Spleen (tissue), 13 donors: ENCODE measurements at regions of chr7 and their contacts with region 1.

Region 1: GRCh38 chr7:29408841-29409243 is 154.8 kb upstream of the PRR15 start:
- DNase-seq: no peak
- H3K4me3 ChIP-seq: no peak overlapping the region
- H3K27ac ChIP-seq: no peak overlapping the region
- H3K4me1 ChIP-seq: peaks cover 0 to 4% (median 2%) of the 10 kb centered on the region in 6 donors
- H3K27me3 ChIP-seq: no peaks in the 10 kb centered on the region
- CTCF ChIP-seq: peak; percentile 82 to 96 (median 93)
- POLR2A ChIP-seq: no peak

Region 2: DNA sequence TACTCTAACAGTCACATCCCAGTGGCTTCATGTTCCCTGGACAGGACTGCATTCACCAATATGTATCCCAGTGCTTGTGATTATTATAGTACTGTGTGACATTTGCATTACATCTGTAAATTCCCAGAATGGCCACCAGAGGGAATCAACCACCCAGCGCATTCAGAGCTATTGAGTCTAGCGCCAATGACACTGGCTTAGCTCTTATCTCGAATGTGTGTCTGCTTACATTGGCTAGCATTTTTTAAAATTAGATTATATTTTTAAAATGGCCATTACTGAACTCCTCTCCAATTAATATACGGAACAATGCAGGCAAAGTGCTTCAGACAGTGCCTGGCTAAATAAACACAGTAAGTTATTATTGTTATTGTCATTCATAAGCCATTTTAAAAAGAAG is 487.0 kb before region 1 on chr7:
- intact Hi-C with region 1: loop called (anchors 2 kb)
- DNase-seq: no peak
- H3K4me3 ChIP-seq: no peak overlapping the region
- H3K27ac ChIP-seq: no peak overlapping the region
- H3K4me1 ChIP-seq: peaks cover 8 to 27% (median 23%) of the 10 kb centered on the region in 6 donors
- H3K27me3 ChIP-seq: no peaks in the 10 kb centered on the region
- CTCF ChIP-seq: peak; percentile 47 to 87 (median 76)
- POLR2A ChIP-seq: no peak

Region 3: GRCh38 chr7:29113384-29114103 is 295.3 kb before region 1 on chr7:
- intact Hi-C with region 1: loop called (anchors 5 kb)
- DNase-seq: no peak
- H3K4me3 ChIP-seq: no peak overlapping the region
- H3K27ac ChIP-seq: peak overlapping the region in 5 of 8 donors; percentile 26 to 64 (median 46)
- H3K4me1 ChIP-seq: peaks cover 0 to 54% (median 24%) of the 10 kb centered on the region in 6 donors
- H3K27me3 ChIP-seq: no peaks in the 10 kb centered on the region
- CTCF ChIP-seq: peak in 7 of 11 experiments; percentile 17 to 48 (median 27)
- POLR2A ChIP-seq: no peak

Region 4: GRCh38 chr7:29189743-29190201 is 219.1 kb before region 1 on chr7:
- intact Hi-C with region 1: loop called (anchors 2 kb)
- DNase-seq: peak; percentile 86
- H3K4me3 ChIP-seq: no peak overlapping the region
- H3K27ac ChIP-seq: no peak overlapping the region
- H3K4me1 ChIP-seq: peaks cover 0 to 24% (median 18%) of the 10 kb centered on the region in 6 donors
- H3K27me3 ChIP-seq: peaks cover 0 to 17% (median 6%) of the 10 kb centered on the region in 7 donors
- CTCF ChIP-seq: peak; percentile 39 to 83 (median 70)
- POLR2A ChIP-seq: no peak